Gastrocnemius medialis (tissue), 4 donors: ENCODE measurements at regions of chr14 and their contacts with region 1.

Region 1: DNA sequence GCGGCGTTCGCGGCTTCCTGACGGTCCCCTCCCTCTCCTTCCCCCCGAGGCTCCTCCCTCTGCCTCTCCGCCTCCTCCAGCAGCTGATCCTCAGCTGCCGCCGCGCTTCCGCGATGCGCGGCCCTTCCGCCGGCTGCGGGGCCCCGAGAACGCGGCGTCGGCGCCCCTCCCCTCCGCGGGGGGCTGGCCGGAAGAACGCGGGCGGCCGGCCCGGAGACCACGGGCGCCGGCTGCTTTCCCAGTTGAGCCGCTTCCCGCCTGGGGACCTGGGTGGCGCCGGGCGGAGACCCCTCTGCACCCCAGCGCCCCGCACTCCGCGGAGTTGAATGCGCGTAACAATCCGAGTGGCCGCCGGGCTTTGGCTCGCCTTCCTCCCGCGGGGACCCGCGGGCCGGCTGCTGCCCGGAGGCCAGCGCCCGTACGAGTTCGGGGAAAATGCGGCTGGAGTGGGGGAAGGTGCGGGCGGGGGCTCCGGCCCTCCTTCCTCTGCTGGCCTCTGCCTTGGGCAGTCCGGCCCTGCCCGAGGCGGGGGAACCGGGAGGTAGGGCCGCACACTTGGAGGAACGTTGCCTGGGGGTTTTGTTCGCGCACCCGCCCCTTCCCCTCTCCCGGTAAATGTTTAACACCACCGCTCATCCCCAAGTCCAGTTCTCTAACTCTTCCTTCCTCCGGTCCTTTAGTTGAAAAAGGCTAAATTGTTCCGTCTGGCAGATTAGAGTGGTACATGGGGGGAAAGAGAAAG is 383 bp upstream of the DCAF5 start:
- DNase-seq: peak; percentile 94 to 95
- ATAC-seq: peak; percentile 80 to 91
- H3K4me3 ChIP-seq: peak overlapping the region; percentile 76 to 99 (median 88)
- H3K27ac ChIP-seq: peak overlapping the region; percentile 92 to 98 (median 98)
- H3K4me1 ChIP-seq: peaks cover 21 to 23% of the 10 kb centered on the region in 2 donors
- H3K27me3 ChIP-seq: no peaks in the 10 kb centered on the region
- CTCF ChIP-seq: peak in 2 of 5 experiments; percentile 24 to 34
- POLR2A ChIP-seq: peak; percentile 89 to 94

Region 2: GRCh38 chr14:67263499-67264149 is 1889.7 kb before region 1 on chr14:
- in situ Hi-C with region 1: no loop called
- intact Hi-C with region 1: no loop called
- DNase-seq: no peak
- ATAC-seq: no peak
- H3K4me3 ChIP-seq: no peak overlapping the region
- H3K27ac ChIP-seq: no peak overlapping the region
- H3K4me1 ChIP-seq: peaks cover 38 to 52% of the 10 kb centered on the region in 2 donors
- H3K27me3 ChIP-seq: no peaks in the 10 kb centered on the region
- CTCF ChIP-seq: no peak
- POLR2A ChIP-seq: no peak

Region 3: GRCh38 chr14:68377459-68377858 is 775.8 kb before region 1 on chr14:
- in situ Hi-C with region 1: no loop called
- intact Hi-C with region 1: no loop called
- DNase-seq: peak in 1 of 2 donors; percentile 48
- ATAC-seq: peak; percentile 32 to 42
- H3K4me3 ChIP-seq: no peak overlapping the region
- H3K27ac ChIP-seq: peak overlapping the region; percentile 25 to 61 (median 51)
- H3K4me1 ChIP-seq: peaks cover 20 to 29% of the 10 kb centered on the region in 2 donors
- H3K27me3 ChIP-seq: no peaks in the 10 kb centered on the region
- CTCF ChIP-seq: no peak
- POLR2A ChIP-seq: peak in 1 of 2 donors; percentile 13

Region 4: DNA sequence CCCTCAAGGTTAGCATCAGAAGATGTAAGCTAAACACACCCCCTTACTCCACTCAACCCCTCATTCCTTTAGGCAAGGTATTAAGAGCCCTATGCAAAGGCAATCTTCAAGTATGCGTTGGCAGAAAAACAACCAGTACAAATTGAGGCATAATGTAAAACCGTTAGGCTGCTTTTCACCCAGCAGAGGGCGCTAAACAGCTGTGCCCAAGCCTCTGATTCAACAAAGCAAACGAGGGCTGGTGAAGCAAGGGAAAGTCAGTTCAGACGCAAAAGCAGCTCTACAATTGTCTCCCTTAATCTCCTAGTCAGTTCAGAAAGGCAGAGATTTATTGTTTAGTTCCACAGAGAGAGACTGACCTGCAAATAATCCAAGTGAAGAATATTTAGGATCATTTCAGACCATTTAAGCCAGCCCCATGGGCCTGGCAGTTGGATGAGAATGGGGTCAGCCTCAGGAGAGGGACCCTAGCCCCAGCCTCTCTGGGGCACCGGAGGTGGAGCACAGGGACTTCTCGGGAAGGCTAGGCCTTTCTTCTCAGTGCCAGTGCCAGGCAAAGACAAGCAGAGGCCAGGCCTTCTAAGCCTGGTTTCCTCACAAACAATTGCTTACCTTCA is 23.9 kb before region 1 on chr14:
- in situ Hi-C with region 1: no loop called
- intact Hi-C with region 1: loop called (anchors 1 kb)
- DNase-seq: peak; percentile 57 to 67
- ATAC-seq: peak; percentile 81 to 86
- H3K4me3 ChIP-seq: no peak overlapping the region
- H3K27ac ChIP-seq: peak overlapping the region; percentile 58 to 79 (median 61)
- H3K4me1 ChIP-seq: peaks cover 63 to 69% of the 10 kb centered on the region in 2 donors
- H3K27me3 ChIP-seq: no peaks in the 10 kb centered on the region
- CTCF ChIP-seq: peak; percentile 79 to 93 (median 87)
- POLR2A ChIP-seq: no peak

Region 5: GRCh38 chr14:69191340-69192111 is 38.2 kb after region 1 on chr14 and contains the start of gene EXD2:
- in situ Hi-C with region 1: no loop called
- intact Hi-C with region 1: loop called (anchors 1 kb)
- DNase-seq: peak; percentile 86 to 87
- ATAC-seq: peak; percentile 98 to 99
- H3K4me3 ChIP-seq: peak within 1 kb of the TSS; percentile 63 to 99 (median 90)
- H3K27ac ChIP-seq: peak within 1 kb of the TSS; percentile 79 to 89 (median 84)
- H3K4me1 ChIP-seq: peaks cover 16 to 18% of the 10 kb centered on the region in 2 donors
- H3K27me3 ChIP-seq: no peaks in the 10 kb centered on the region
- CTCF ChIP-seq: no peak
- POLR2A ChIP-seq: peak in 1 of 2 donors; percentile 55
- total RNA-seq, gene EXD2: 13.7 to 19.7 (median 16.5) TPM

Region 6: DNA sequence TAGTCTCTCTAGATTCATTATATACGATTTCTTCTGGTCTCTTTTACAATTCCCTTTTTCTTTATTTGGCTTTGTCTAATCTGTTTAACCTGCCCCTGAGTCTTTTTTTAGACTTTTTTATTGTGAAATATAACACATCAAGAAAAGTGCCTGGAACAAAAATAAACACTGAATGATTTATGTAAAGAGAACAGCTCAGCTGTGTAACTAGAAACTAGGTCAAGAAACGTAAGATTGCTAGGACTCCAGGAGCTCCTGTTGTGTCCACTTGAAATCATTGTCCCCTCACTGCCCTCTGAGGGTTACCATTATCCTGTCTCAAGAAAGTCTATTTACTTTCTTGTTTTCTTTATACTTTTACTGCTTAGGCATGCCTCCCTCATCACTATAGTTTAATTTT is 61.1 kb after region 1 on chr14:
- in situ Hi-C with region 1: no loop called
- intact Hi-C with region 1: loop called (anchors 2 kb)
- DNase-seq: peak; percentile 10 to 41
- ATAC-seq: peak; percentile 100
- H3K4me3 ChIP-seq: no peak overlapping the region
- H3K27ac ChIP-seq: peak overlapping the region; percentile 67 to 83 (median 72)
- H3K4me1 ChIP-seq: peaks cover 15 to 25% of the 10 kb centered on the region in 2 donors
- H3K27me3 ChIP-seq: no peaks in the 10 kb centered on the region
- CTCF ChIP-seq: no peak
- POLR2A ChIP-seq: no peak

Region 7: DNA sequence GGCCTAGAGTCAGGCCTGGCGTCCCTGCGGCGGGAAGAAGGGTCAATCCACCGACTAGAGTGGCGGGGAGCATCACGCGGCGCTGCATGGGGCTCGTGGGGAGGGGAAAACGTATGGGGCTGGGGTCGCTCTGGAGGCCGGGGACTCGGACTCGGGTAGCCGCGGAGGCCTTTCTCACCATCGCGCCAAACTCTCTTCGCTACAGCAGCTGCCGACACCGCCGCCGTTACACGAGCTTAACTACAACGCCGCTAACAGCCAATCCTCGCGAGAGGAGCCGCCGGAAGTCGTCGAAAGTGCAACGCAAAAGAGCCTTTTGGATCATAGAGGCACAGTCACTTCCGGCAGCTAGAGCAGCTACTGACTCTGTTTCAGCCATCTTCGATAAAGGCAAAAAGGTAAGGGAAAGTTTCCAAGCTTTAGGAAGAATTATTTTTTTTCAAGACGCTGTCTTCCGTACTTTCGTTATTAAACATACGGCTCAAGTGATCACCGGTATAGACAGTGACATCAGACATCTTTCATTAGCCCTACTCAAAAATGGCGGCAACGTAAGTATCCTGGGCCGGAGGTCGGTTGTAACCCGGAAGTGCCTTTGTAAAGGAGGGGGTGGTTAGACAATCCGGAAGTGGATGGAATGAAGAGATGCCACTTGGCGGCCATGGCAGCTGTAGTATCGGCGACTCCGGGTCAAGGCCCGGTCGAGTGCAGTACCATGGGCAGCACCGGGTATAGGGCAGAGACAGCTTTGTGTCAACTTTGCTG is 244.9 kb after region 1 on chr14 and contains the starts of genes ERH and SLC39A9:
- in situ Hi-C with region 1: no loop called
- intact Hi-C with region 1: loop called (anchors 1 kb)
- DNase-seq: peak; percentile 94 to 96
- ATAC-seq: peak; percentile 99
- H3K4me3 ChIP-seq: peak within 1 kb of the TSS; percentile 82 to 91 (median 84)
- H3K27ac ChIP-seq: peak within 1 kb of the TSS; percentile 89 to 94 (median 91)
- H3K4me1 ChIP-seq: peaks cover 37 to 42% of the 10 kb centered on the region in 2 donors
- H3K27me3 ChIP-seq: no peaks in the 10 kb centered on the region
- CTCF ChIP-seq: no peak
- POLR2A ChIP-seq: peak; percentile 59 to 71
- total RNA-seq, gene ERH: 46.7 to 49.2 (median 48.1) TPM
- total RNA-seq, gene SLC39A9: 20.6 to 23.2 (median 21.8) TPM

Region 8: DNA sequence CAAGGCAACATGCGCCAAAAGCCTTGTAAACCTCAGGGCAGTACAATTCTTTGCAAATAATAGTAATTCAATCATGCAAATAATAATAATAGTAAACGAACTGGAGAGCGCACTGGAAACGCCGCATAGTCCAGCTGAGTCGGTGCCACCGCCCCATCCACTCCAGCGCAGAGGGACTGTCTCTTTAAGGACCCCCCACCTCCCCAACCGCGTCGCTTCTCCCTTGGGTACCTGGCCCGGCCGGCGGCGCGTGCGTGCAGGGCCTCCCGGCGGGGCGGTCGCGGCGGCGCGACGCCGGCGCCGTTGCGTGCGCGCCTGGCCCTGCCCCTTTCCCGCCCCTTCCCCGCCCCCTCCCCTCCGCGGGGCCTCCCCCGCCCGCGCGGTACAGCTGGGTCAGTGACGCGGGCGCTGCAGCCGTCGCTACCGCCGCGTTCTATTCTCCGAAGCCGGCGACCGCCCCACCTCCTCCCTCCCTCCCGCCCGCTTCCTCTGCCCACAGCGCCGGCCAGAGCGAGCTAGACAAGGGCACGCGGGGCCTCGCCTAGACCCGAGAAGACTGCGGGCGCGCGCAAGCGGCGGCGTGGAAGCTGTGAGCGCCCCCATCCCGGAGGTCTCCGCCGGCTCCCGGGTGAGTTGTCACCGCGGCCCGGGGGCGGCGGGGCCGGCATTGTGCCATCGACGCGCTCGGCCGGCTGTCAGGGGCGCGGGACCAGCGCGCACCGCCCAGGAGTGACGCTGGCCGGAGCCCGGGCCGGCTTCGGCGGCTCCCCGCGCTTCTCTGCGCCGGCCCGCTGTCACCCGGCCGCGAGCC is 458.1 kb after region 1 on chr14 and contains the start of gene SUSD6:
- in situ Hi-C with region 1: no loop called
- intact Hi-C with region 1: loop called (anchors 5 kb)
- DNase-seq: peak; percentile 81 to 88
- ATAC-seq: peak; percentile 81 to 83
- H3K4me3 ChIP-seq: peak within 1 kb of the TSS; percentile 54 to 89 (median 74)
- H3K27ac ChIP-seq: peak within 1 kb of the TSS; percentile 91 to 99 (median 96)
- H3K4me1 ChIP-seq: peaks cover 49% of the 10 kb centered on the region in 2 donors
- H3K27me3 ChIP-seq: no peaks in the 10 kb centered on the region
- CTCF ChIP-seq: no peak
- POLR2A ChIP-seq: peak; percentile 78 to 83
- total RNA-seq, gene SUSD6: 11.9 to 26.3 (median 16.2) TPM

Region 9: DNA sequence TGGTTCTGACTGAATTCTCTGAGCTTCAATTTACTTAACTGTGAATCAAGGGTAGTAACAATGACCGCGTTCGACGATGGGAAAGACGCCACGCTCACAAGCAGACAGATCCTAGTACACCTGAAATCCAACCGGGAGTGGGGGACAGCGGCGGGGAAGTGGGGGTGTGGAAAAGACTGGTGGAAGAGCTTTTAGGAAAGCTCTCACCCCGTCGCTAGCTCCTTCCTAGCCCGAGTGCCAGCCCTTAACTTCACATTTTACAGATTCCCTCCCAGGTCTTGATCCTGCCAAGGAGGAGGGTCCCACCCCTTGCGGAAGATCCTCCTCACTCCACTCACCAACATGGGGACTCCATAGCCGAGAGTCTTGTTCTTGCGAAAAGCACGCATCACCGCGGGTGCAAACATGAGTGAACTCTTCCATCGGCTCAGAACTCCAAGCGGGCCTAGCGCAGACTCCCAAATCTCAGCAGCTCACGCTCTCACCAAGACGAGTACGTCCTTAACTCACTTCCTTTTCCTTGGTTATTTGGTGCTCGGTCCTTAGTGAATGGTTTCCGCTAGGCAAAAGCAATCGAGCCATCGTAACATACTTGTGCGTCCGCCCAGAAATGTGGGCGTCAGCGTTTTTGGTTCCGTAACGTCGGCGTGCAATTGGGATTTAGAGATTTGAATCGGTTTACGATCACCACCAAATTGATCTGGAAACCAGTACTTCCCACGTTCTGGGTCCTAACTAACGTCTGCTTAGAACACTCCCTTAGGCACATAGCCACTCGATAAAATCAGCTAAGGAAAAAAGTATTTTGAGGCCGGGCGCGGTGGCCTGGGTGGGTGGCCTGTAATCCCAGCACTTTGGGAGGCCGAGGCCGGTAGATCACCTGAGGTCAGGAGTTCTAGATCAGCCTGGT is 1206.1 kb after region 1 on chr14 and contains the start of gene COX16:
- in situ Hi-C with region 1: no loop called
- intact Hi-C with region 1: loop called (anchors 5 kb)
- DNase-seq: peak; percentile 70 to 81
- ATAC-seq: peak; percentile 100
- H3K4me3 ChIP-seq: peak within 1 kb of the TSS; percentile 76 to 91 (median 84)
- H3K27ac ChIP-seq: peak within 1 kb of the TSS; percentile 83 to 91 (median 88)
- H3K4me1 ChIP-seq: peaks cover 43% of the 10 kb centered on the region in 2 donors
- H3K27me3 ChIP-seq: no peaks in the 10 kb centered on the region
- CTCF ChIP-seq: peak in 1 of 5 experiments; percentile 9
- POLR2A ChIP-seq: peak in 1 of 2 donors; percentile 27
- total RNA-seq, gene COX16: 16.8 to 38.6 (median 26.7) TPM